Activated CD4-positive, alpha-beta memory T cell treated with anti-CD3 and anti-CD28 coated beads for 36 hours (primary cell): ENCODE measurements at regions of chr11 and their contacts with region 1.

Region 1: GRCh38 chr11:13343931-13344717 is 66.5 kb downstream of the BMAL1 start:
- DNase-seq: peak; percentile 80
- H3K4me3 Mint-ChIP-seq: no peak overlapping the region
- H3K27ac Mint-ChIP-seq: no peak overlapping the region
- H3K4me1 Mint-ChIP-seq: peaks cover 43% of the 10 kb centered on the region
- H3K27me3 Mint-ChIP-seq: no peaks in the 10 kb centered on the region

Region 2: DNA sequence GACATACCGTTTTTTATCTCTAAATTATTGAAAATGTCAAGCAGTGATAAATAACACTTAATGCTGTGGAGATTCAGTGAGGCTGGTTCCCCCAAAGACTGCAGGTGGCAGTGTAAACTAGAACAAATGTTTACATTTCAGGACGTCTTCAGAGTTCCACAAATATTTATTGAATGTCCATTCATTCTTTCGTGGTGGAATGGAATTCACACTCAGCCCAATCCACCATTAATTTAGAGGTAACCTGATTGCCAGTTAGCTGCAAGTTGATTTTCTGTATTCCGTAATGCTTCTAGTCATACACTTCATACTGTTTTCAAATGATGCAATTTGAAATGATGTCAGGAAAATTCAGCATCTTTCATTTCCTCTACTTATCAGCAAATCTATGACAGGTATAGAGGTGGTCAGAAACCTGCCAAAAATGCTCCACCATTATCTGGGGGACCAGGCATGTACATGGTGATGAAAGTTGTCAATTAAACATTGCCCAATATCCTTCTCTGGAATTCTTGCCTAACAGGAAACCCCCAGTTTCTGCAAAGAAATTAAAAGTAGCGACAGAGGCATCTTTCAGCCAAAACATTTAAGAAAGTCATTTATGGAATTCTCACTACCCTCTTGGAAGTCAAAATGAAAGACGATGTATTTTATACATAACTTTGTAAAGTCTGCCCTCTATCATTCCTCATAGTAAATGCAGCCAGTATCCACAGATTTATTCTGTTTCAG is 160.9 kb before region 1 on chr11:
- CTCF ChIA-PET with region 1: interaction called, 4 read pairs
- POLR2A ChIA-PET with region 1: no interaction called
- intact Hi-C with region 1: loop called (anchors 2 kb)
- DNase-seq: no peak
- H3K4me3 Mint-ChIP-seq: no peak overlapping the region
- H3K27ac Mint-ChIP-seq: no peak overlapping the region
- H3K4me1 Mint-ChIP-seq: peaks cover 7% of the 10 kb centered on the region
- H3K27me3 Mint-ChIP-seq: peaks cover 15% of the 10 kb centered on the region

Region 3: GRCh38 chr11:13238879-13239514 is 105.1 kb before region 1 on chr11:
- CTCF ChIA-PET with region 1: interaction called, 14 read pairs
- POLR2A ChIA-PET with region 1: no interaction called
- intact Hi-C with region 1: no loop called
- DNase-seq: peak; percentile 55
- H3K4me3 Mint-ChIP-seq: no peak overlapping the region
- H3K27ac Mint-ChIP-seq: no peak overlapping the region
- H3K4me1 Mint-ChIP-seq: no peaks in the 10 kb centered on the region
- H3K27me3 Mint-ChIP-seq: peaks cover 14% of the 10 kb centered on the region

Region 4: DNA sequence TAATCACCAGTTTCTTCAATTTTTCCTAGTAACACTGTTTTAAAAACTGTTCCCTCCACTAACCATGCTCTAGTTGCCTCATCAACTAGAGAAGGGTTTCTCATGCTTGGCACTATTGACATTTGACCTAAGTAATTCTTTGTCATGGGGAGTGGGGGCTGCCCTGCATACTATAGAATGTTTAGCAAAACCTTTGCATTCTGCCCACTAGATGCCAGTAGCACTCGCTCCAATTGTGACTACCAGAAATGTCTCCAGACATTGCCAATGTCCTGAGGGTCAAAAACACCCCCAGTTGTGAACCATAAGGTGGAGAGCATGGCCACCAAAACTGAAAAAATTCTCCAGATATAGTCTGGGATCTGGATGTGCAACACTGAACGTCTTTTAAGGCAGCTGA is 94.1 kb before region 1 on chr11:
- CTCF ChIA-PET with region 1: interaction called, 13 read pairs
- POLR2A ChIA-PET with region 1: no interaction called
- intact Hi-C with region 1: loop called (anchors 1 kb)
- DNase-seq: no peak
- H3K4me3 Mint-ChIP-seq: no peak overlapping the region
- H3K27ac Mint-ChIP-seq: no peak overlapping the region
- H3K4me1 Mint-ChIP-seq: no peaks in the 10 kb centered on the region
- H3K27me3 Mint-ChIP-seq: peaks cover 6% of the 10 kb centered on the region